Dorsolateral prefrontal cortex (tissue), 120 donors: ENCODE measurements at regions of chr17 and their contacts with region 1.

Region 1: GRCh38 chr17:12667299-12667958 is 1.7 kb downstream of the MYOCD start:
- DNase-seq: no peak
- H3K4me3 ChIP-seq: peak overlapping the region in 8 of 59 donors; percentile 0 to 68 (median 20)
- H3K27ac ChIP-seq: peak overlapping the region in 1 of 59 donors; percentile 39
- H3K27me3 ChIP-seq: peaks cover 0 to 73% (median 29%) of the 10 kb centered on the region in 45 donors
- CTCF ChIP-seq: peak in 54 of 56 donors; percentile 30 to 77 (median 56)

Region 2: DNA sequence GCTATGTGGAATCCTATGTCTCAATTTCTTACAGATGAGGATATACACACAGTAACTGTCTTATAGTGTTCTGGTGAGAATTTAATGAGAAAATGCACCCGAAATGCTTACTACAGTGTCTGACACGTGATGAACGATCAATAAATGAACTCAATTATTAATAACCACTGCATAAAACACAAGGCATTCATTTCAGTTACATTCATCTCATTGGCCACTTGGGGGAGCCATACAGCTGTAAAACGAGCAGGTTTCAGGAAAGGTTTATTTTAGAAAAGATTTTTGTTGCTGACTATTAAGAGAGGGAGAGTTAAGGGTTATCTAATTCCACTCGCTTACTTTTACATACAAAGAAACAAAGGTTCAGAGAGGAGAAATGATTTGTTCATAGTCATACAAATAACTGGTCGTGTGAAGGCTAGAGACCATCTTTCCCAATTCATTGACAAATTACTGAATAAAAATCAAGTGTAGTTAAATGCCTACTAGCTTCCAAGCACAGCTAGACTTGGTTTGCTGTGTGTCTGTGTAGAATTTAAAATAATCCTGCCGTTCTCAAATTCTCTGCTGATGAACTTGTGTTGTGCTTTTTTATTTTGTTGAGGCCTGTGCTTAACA is 486.7 kb before region 1 on chr17:
- intact Hi-C with region 1: loop called (anchors 5 to 10 kb)
- DNase-seq: peak in 2 of 10 donors; percentile 20 to 33
- H3K4me3 ChIP-seq: peak overlapping the region in 2 of 59 donors; percentile 13 to 27
- H3K27ac ChIP-seq: peak overlapping the region in 3 of 59 donors; percentile 2 to 36 (median 12)
- H3K27me3 ChIP-seq: no peaks in the 10 kb centered on the region
- CTCF ChIP-seq: peak; percentile 61 to 89 (median 78)

Region 3: DNA sequence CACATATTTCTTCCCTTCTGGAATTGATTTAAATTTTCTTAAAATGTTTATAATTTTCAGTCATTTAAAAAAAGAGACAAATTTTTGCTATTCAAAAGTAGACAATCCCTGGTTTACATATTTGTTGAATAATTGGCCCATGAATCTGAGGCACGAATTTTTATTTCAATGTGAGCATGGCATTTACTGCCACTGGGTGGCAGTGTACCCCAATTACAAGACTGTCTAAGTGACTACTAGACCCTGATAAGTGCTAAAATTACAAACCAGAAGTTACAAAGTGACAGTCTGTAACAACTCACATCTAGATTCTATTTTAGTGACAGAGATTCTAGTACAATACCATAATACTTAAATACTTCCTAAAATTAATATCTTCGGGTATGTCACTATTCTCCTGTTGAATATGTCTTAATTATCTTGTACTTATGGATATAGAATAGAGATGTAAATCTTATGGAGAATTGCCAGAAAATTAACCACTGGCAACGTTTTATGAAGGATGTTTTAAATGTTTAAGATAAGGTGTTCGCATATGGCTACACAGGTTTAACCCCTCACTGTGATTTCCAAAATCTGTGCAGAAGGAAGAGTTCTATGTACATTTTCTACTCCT is 410.9 kb before region 1 on chr17:
- intact Hi-C with region 1: loop called (anchors 5 kb)
- DNase-seq: peak in 6 of 10 donors; percentile 29 to 53 (median 42)
- H3K4me3 ChIP-seq: no peak overlapping the region
- H3K27ac ChIP-seq: no peak overlapping the region
- H3K27me3 ChIP-seq: peaks cover 0 to 9% (median 0%) of the 10 kb centered on the region in 45 donors
- CTCF ChIP-seq: peak; percentile 64 to 90 (median 78)

Region 4: DNA sequence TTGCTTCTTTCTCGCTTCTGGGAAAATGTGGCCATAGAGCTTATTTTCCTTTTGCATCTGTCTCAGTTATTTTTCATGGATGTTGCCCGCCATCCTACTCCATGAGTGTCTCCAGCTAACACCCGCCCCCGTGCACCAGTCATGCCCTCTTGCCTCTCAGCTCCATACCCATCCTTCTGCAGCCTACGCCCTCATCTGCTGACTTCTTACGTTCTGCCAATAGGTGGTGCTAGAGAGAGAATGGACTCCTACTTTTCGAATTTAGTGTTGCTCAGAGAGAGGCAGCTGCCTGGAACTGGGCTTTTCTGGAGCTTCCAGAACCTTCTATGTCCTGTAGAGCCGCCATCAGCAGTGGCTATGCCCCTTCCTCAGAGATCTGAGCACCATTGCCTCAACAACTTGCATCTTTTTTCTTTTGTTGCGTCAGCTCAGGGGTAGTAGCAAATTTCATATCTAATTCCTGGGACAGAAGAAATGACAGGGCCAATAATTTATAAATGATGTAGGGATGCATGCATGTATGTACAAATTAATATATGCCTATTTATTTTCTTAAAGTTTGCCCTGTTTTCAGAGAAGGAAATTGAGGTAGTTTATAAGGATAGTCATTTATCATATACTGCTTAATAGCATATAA is 121.4 kb before region 1 on chr17:
- intact Hi-C with region 1: loop called in 1 of 2 experiments (anchors 5 kb)
- DNase-seq: peak in 2 of 10 donors; percentile 6 to 22
- H3K4me3 ChIP-seq: no peak overlapping the region
- H3K27ac ChIP-seq: no peak overlapping the region
- H3K27me3 ChIP-seq: peaks cover 0 to 7% (median 0%) of the 10 kb centered on the region in 45 donors
- CTCF ChIP-seq: peak; percentile 24 to 78 (median 65)

Region 5: GRCh38 chr17:12744298-12744697 is 76.9 kb after region 1 on chr17:
- intact Hi-C with region 1: no loop called
- DNase-seq: no peak
- H3K4me3 ChIP-seq: no peak overlapping the region
- H3K27ac ChIP-seq: no peak overlapping the region
- H3K27me3 ChIP-seq: peaks cover 0 to 9% (median 0%) of the 10 kb centered on the region in 45 donors
- CTCF ChIP-seq: no peak

Region 6: DNA sequence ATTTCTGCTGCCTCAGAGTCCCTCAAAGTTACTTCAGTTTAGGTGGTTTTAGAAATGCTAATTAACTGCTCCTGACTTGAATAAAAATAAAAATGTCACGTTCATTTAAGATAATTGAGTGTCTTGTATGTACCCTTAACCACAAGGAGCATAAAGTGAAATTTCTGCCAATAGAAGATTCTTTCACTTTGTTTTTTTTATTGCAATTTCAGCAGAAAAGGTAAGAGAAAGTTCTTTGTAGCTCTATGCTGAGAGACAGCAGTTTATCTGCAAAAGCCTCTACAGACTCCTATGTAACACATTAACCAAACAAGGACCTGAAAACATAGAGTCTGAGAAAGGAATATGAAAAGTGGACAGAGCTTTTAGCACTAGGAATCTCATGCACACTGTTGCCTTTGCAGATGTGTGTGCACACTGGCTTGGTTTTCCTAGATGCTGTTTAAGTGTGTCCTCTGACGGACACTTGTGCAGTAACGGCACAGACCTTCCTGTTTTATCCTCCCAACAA is 133.5 kb after region 1 on chr17:
- intact Hi-C with region 1: no loop called
- DNase-seq: no peak
- H3K4me3 ChIP-seq: no peak overlapping the region
- H3K27ac ChIP-seq: no peak overlapping the region
- H3K27me3 ChIP-seq: no peaks in the 10 kb centered on the region
- CTCF ChIP-seq: no peak

Region 7: DNA sequence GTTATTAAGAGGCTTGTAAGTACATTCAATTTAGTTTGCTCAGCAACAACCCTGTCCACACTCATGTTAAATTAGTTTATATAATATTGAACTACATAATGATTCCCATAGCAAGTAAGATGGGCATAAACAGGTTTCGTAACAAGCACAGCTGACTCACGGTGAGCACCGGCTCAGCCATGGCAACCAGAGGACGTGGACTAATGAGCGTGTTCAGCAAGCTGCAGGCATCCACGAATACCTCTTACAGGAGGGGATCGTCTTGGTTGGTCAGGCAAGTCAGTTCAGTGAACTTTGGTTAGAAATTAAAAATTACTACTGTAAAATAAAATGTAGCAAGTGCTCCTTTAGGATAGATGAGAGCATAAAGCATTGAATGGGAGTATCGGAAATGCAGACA is 292.0 kb after region 1 on chr17:
- intact Hi-C with region 1: no loop called
- DNase-seq: peak in 2 of 10 donors; percentile 41 to 42
- H3K4me3 ChIP-seq: no peak overlapping the region
- H3K27ac ChIP-seq: peak overlapping the region in 1 of 59 donors; percentile 1
- H3K27me3 ChIP-seq: no peaks in the 10 kb centered on the region
- CTCF ChIP-seq: no peak